CD8-positive, alpha-beta T cell (primary cell): ENCODE measurements at regions of chr13 and their contacts with region 1.

Region 1: DNA sequence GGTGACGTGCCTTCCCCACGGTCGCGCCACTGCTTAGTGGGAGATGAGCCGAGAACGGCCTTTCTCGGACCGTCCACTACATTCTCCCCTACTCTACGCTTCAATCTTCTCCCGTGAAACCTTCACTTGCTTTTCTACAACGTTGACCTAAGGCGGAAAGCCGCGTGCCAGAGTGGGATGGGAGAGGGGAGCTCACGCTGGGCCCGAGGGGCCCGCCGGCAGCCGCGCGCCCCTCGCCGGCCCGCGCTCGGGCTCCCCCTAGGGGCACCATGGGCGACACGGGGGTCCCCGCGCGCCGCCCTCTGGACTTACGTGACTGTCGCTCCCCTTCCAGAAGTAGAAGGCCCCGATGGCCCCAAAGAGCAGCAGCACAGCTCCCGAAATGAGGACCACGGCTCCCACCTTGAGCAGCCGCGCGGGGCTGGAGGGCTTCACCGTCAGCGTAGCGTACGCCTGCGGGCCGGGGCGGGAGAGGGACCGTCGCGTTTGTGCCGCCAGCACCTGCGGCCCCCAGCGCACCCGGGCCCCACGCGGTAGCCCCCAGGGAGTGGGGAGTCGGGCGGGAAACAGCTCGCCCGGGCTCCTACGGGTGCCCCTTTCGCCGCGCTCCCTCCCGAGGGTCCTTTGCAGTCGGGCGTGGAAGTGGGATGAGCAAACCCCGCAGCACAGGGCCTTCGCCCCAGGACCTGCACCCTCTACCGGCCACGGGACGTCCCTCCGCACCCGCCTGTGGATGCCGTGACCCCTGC is 727 bp downstream of the CNMD start:
- DNase-seq: peak in 8 of 9 experiments; percentile 5 to 62 (median 30)
- ATAC-seq: peak; percentile 49
- H3K4me3 ChIP-seq: peak overlapping the region; percentile 23 to 35
- H3K4me3 Mint-ChIP-seq: peak overlapping the region; percentile 62
- H3K27ac ChIP-seq: no peak overlapping the region
- H3K27ac Mint-ChIP-seq: no peak overlapping the region
- H3K4me1 ChIP-seq: peaks cover 4% of the 10 kb centered on the region
- H3K4me1 Mint-ChIP-seq: peaks cover 10% of the 10 kb centered on the region
- H3K27me3 ChIP-seq: peaks cover 11 to 14% of the 10 kb centered on the region in 2 experiments
- H3K27me3 Mint-ChIP-seq: peaks cover 46% of the 10 kb centered on the region
- CTCF ChIP-seq: peak; percentile 52

Region 2: DNA sequence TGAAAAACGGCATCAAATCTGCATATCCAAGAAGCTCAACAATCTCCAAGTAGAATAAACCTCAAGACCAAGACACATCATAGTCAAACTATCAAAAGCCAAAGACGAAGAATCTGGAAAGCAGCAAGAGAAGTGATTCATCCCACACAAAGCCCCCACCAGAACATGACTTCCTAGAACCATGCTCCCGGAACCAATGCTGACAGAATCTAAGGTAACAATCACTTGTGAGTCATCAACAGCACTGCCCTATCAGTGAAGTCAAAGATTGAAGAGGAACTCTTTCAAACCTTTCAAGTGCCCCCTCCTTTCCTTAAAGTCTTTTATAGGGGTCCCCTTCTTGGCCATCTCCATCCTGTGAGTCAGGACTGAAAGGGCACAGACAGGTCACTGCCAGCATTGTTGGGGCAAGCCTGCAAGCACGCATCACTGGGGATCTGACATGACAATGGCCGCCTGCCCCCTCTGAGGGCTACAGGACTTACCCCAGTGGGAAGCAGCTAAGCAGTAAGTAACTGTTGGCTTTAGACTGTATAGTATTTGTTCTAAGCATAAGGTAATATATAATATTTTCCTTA is 877.1 kb before region 1 on chr13 and contains the start of gene CCDC70:
- CTCF ChIA-PET with region 1: no interaction called
- POLR2A ChIA-PET with region 1: no interaction called
- intact Hi-C with region 1: no loop called
- DNase-seq: no peak
- ATAC-seq: no peak
- H3K4me3 ChIP-seq: no peak within 1 kb of the TSS
- H3K4me3 Mint-ChIP-seq: no peak within 1 kb of the TSS
- H3K27ac ChIP-seq: no peak within 1 kb of the TSS
- H3K27ac Mint-ChIP-seq: no peak within 1 kb of the TSS
- H3K4me1 ChIP-seq: peaks cover 5% of the 10 kb centered on the region
- H3K4me1 Mint-ChIP-seq: peaks cover 10% of the 10 kb centered on the region
- H3K27me3 ChIP-seq: no peaks in the 10 kb centered on the region
- H3K27me3 Mint-ChIP-seq: no peaks in the 10 kb centered on the region
- CTCF ChIP-seq: no peak
- total RNA-seq, gene CCDC70: not detected

Region 3: GRCh38 chr13:52713894-52714293 is 25.0 kb before region 1 on chr13:
- CTCF ChIA-PET with region 1: no interaction called
- POLR2A ChIA-PET with region 1: no interaction called
- intact Hi-C with region 1: loop called in 1 of 2 experiments (anchors 1 kb)
- DNase-seq: no peak
- ATAC-seq: no peak
- H3K4me3 ChIP-seq: no peak overlapping the region
- H3K4me3 Mint-ChIP-seq: no peak overlapping the region
- H3K27ac ChIP-seq: no peak overlapping the region
- H3K27ac Mint-ChIP-seq: no peak overlapping the region
- H3K4me1 ChIP-seq: no peaks in the 10 kb centered on the region
- H3K4me1 Mint-ChIP-seq: no peaks in the 10 kb centered on the region
- H3K27me3 ChIP-seq: no peaks in the 10 kb centered on the region
- H3K27me3 Mint-ChIP-seq: peaks cover 20% of the 10 kb centered on the region
- CTCF ChIP-seq: no peak

Region 4: GRCh38 chr13:52760077-52760476 is 21.2 kb after region 1 on chr13:
- CTCF ChIA-PET with region 1: no interaction called
- POLR2A ChIA-PET with region 1: no interaction called
- intact Hi-C with region 1: no loop called
- DNase-seq: no peak
- ATAC-seq: no peak
- H3K4me3 ChIP-seq: no peak overlapping the region
- H3K4me3 Mint-ChIP-seq: no peak overlapping the region
- H3K27ac ChIP-seq: no peak overlapping the region
- H3K27ac Mint-ChIP-seq: no peak overlapping the region
- H3K4me1 ChIP-seq: no peaks in the 10 kb centered on the region
- H3K4me1 Mint-ChIP-seq: no peaks in the 10 kb centered on the region
- H3K27me3 ChIP-seq: no peaks in the 10 kb centered on the region
- H3K27me3 Mint-ChIP-seq: peaks cover 12% of the 10 kb centered on the region
- CTCF ChIP-seq: no peak

Region 5: DNA sequence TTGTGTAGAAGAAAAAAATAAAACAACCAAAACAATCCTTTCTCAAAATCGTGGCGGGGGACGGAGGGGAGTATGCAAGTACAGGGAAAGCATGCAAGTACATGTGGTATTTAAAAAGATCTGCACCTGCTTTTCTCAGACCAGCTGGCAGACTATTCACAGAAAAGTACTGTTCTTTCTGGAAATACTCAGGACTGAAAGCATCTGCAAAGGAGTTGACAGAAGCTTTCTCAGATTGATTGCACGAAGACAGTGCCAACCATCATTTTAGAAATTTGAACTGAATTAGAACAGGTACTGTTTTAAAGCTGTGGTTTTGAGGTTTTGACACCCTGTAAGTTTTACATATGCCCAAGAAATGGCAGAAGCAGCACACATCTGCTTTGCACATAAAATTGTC is 129.3 kb after region 1 on chr13:
- CTCF ChIA-PET with region 1: no interaction called
- POLR2A ChIA-PET with region 1: no interaction called
- intact Hi-C with region 1: no loop called
- DNase-seq: no peak
- ATAC-seq: no peak
- H3K4me3 ChIP-seq: no peak overlapping the region
- H3K4me3 Mint-ChIP-seq: no peak overlapping the region
- H3K27ac ChIP-seq: no peak overlapping the region
- H3K27ac Mint-ChIP-seq: no peak overlapping the region
- H3K4me1 ChIP-seq: no peaks in the 10 kb centered on the region
- H3K4me1 Mint-ChIP-seq: no peaks in the 10 kb centered on the region
- H3K27me3 ChIP-seq: no peaks in the 10 kb centered on the region
- H3K27me3 Mint-ChIP-seq: peaks cover 13% of the 10 kb centered on the region
- CTCF ChIP-seq: no peak